Lower leg skin (tissue), 4 donors: ENCODE measurements at regions of chr16 and their contacts with region 1.

Region 1: DNA sequence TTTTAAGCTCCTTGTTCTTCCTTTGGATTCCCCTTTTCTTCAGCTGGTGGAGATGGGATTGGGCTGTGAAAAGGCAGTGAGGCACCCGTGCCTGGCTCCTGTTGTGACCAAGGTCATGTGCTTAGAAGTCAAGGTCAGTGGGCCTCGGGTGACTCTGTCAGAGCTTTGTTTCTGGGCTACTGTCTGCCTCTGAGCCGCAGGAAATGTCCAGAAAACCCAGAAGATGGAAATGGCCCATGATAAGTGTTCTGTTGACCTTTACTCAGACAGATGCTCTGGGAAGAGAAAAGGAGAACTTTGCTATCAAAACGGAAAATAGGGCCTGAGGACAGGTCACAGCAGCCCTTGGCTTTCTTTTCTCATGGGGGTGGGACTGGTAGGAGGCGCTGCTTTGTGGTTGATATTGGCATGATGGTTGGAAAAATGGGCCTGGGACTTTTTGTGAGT is 2.9 kb downstream of the ABCC1 start:
- DNase-seq: no peak
- H3K4me3 ChIP-seq: no peak overlapping the region
- CTCF ChIP-seq: no peak
- POLR2A ChIP-seq: no peak

Region 2: DNA sequence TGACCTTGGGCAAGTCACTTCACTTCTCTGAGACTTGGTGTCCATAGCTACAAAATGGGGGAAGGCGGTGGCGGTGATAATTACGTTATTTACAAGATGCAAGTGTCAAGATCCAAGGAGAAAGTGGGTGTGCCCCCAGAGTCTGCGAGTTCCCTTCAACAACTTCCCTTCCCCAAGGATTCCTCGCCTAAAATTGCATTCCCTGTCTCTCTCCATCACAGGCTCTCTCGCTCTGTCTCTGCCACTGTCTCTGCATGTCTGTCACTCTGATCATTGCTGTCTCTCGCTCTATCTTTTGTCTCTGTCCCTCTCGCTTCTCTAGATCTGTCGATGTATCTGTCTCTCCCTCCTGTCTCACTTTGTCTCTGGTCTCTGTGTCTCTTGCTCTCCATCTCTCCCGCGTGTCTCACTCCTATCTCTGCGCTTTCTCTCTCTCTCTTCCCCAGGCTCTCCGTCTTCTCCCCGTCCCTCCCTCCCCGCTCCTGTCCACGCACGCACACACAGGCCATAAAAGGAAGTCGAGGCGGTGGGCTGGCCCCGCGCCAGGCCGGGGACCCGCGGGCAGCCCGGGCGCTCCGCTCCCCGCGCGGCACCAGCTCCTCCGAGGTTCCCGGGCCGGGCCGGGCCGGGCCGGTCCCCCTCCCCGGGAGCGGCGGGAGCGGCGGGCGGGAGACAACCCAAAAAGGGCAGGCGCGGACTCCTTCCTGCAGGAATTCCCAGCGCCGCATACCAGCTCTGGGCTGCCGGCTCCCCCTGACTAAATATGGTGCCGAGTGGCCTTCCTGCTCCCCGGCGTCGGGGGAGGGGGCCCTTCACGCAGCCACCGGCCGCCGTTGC is 94.3 kb before region 1 on chr16:
- intact Hi-C with region 1: no loop called
- DNase-seq: peak in 1 of 2 donors; percentile 87
- H3K4me3 ChIP-seq: no peak overlapping the region
- CTCF ChIP-seq: no peak
- POLR2A ChIP-seq: no peak

Region 3: DNA sequence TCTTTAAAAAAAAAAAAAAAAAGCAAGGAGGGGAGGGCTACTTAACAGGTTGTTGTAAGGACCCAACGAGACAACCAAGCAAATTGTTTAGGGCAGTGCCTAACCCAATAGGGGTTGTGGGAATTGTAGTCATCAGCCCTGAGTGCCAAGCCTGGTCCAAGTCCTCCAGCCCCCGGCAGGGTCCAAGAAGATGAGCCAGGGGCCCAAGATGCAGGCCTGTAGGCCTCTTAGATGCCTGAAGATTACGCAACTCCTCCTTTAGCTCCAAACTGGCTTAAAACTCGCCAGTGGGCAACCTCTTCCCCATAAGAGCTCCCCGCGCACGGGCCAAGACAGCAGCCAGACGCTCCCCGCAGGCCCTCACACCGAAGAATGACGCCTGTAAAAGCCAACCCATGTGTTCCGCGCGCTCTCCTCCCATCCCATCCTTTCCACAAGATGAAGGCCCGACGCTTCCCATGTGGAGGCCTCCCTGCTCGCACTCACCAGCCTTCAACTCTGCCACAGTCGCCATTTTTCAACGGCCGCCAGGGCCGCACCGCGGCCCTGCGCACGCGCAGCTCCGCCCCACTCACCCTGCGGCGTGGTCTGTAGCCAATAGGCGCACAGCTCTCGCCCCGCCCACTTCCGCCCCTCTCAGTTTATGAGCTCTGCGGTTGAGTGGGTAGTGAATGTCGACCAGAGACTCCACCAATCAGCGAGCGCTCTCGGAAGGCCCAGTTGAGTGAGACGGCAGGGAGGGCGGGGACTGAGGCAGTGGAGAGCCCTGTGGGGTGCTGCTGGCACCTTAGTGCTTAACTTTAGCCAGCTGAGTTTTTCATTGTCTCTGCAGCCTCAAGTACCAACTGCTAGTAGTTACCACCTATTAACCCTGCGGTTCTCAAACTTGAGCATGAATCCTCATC is 64.0 kb before region 1 on chr16 and contains the start of gene CEP20:
- intact Hi-C with region 1: no loop called
- DNase-seq: peak; percentile 100
- H3K4me3 ChIP-seq: peak within 1 kb of the TSS; percentile 90
- CTCF ChIP-seq: no peak
- POLR2A ChIP-seq: no peak
- total RNA-seq, gene CEP20: 39.7 to 43.3 (median 40.7) TPM

Region 4: DNA sequence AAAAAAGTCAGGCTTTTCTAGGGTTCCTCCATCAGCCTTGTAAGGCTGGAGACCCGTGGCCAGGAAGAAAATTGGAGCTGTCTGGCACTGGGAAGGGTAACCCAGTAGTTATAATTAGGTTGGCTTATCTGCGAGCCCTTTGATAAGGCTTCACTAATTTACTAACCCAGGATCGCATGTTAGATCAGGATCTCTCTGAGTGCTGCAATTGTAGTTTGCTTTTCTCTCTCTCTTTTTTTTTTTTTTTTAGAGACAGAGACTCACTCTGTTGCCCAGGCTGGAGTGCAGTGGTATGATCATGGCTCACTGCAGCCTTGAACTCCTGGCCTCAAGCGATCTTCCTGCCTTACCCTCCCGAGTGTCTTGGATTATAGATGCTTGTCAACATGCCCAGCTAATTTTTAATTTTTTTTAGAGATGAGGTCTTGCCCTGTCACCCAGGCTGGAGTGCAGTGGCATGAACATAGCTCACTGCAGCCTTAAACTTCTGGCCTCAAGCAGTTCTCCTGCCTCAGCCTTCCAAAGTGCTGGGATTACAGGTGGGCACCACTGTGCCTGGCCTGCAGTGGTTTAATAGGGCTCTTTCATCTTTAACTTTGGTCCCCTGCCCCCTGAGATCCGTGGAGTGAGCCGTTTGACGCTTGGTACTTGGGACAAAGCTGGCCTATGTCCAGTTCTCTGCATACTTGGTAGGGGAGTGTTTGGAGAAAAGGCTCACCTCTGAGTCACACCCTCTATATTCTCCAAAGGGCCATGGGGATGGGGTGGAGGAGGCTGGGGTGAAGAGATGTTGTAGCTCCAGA is 14.3 kb after region 1 on chr16:
- intact Hi-C with region 1: loop called (anchors 2 kb)
- DNase-seq: no peak
- H3K4me3 ChIP-seq: no peak overlapping the region
- CTCF ChIP-seq: no peak
- POLR2A ChIP-seq: no peak

Region 5: GRCh38 chr16:17439580-17439979 is 1487.3 kb after region 1 on chr16:
- intact Hi-C with region 1: no loop called
- DNase-seq: peak in 1 of 2 donors; percentile 0
- H3K4me3 ChIP-seq: no peak overlapping the region
- CTCF ChIP-seq: no peak
- POLR2A ChIP-seq: no peak